B cell (primary cell): ENCODE measurements at regions of chr1 and their contacts with region 1.

Region 1: DNA sequence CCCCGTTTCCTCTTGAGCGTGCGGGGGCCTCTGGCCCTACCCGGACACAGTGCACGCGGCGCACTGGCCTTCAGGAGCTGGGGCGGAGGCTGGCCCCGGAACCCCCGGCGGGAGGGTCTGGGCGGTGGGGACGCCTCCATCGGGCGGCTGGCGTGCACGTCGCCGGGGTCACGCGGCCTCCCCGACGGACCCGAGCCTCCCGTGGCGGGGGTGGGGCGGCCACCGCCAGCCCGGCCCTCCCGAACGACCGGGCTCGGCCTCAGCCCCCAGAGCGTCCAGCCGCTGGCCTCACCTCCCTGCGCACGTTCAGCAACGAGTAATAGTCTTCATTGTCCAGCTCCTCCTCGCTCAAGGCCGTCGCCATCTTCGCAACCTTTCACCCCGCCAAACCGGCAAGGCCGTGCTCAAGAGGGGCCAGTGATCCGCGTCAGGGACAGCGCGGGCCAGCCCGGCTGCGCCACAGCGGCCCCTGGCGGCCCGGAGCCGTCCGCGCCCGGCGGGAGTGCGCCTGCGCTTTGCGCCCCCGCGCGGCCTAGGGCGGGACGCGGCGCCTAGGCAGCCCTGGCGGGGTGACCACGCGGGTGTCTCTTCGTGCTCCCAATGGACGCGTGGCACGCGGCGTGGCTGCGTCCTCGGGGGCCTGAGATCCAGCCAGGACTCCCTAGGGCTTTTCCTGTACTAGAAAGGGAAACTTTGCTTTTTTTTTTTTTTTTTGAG is at the start of gene DNAJC11:
- DNase-seq: peak; percentile 92
- ATAC-seq: peak; percentile 98
- H3K4me3 ChIP-seq: peak within 1 kb of the TSS; percentile 63 to 91 (median 79)
- H3K4me3 Mint-ChIP-seq: peak within 1 kb of the TSS; percentile 95
- H3K27ac ChIP-seq: peak within 1 kb of the TSS in 1 of 2 donors; percentile 91
- H3K27ac Mint-ChIP-seq: peak within 1 kb of the TSS; percentile 96
- H3K4me1 ChIP-seq: peaks cover 8 to 17% of the 10 kb centered on the region in 2 donors
- H3K4me1 Mint-ChIP-seq: peaks cover 22% of the 10 kb centered on the region
- H3K27me3 ChIP-seq: no peaks in the 10 kb centered on the region
- H3K27me3 Mint-ChIP-seq: no peaks in the 10 kb centered on the region
- CTCF ChIP-seq: peak; percentile 95
- total RNA-seq, gene DNAJC11: 51.6 and 57.2 TPM in 2 replicates

Region 2: GRCh38 chr1:6199298-6200187 is 502.1 kb before region 1 on chr1 and contains the start of gene RPL22:
- CTCF ChIA-PET with region 1: no interaction called
- POLR2A ChIA-PET with region 1: no interaction called
- intact Hi-C with region 1: loop called (anchors 5 kb)
- DNase-seq: peak; percentile 98
- ATAC-seq: peak; percentile 93
- H3K4me3 ChIP-seq: peak within 1 kb of the TSS; percentile 75 to 99 (median 89)
- H3K4me3 Mint-ChIP-seq: peak within 1 kb of the TSS; percentile 90
- H3K27ac ChIP-seq: peak within 1 kb of the TSS; percentile 44 to 83
- H3K27ac Mint-ChIP-seq: peak within 1 kb of the TSS; percentile 96
- H3K4me1 ChIP-seq: peaks cover 23 to 24% of the 10 kb centered on the region in 2 donors
- H3K4me1 Mint-ChIP-seq: peaks cover 39% of the 10 kb centered on the region
- H3K27me3 ChIP-seq: peaks cover 0 to 3% (median under 1%) of the 10 kb centered on the region in 4 experiments
- H3K27me3 Mint-ChIP-seq: peaks cover 6% of the 10 kb centered on the region
- CTCF ChIP-seq: no peak
- total RNA-seq, gene RPL22: 444 and 471 TPM in 2 replicates

Region 3: DNA sequence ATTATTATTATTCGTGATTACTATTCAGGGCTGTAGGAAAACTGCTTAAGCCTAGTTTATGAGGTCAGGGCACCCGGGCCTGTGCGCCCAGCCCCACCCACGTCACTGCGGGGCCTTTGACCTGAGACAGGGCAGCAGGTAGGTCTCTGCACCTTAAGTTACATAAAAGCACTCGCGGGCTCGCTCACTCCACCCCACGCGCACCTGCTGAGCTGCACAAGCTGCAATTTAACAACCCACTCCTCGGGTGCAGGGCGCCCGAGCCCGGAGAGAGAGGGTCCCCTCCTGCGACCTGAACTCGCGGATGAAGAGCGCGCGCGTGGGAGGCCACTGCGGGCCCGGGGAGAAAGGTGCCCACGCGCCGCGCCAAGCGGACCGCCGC is 466.3 kb before region 1 on chr1:
- CTCF ChIA-PET with region 1: no interaction called
- POLR2A ChIA-PET with region 1: no interaction called
- intact Hi-C with region 1: loop called (anchors 5 kb)
- DNase-seq: no peak
- ATAC-seq: no peak
- H3K4me3 ChIP-seq: peak overlapping the region in 4 of 5 experiments; percentile 47 to 84 (median 65)
- H3K4me3 Mint-ChIP-seq: peak overlapping the region; percentile 89
- H3K27ac ChIP-seq: no peak overlapping the region
- H3K27ac Mint-ChIP-seq: peak overlapping the region; percentile 71
- H3K4me1 ChIP-seq: peaks cover 9 to 15% of the 10 kb centered on the region in 2 donors
- H3K4me1 Mint-ChIP-seq: peaks cover 10% of the 10 kb centered on the region
- H3K27me3 ChIP-seq: peaks cover 0 to 17% (median 7%) of the 10 kb centered on the region in 4 experiments
- H3K27me3 Mint-ChIP-seq: peaks cover 14% of the 10 kb centered on the region
- CTCF ChIP-seq: no peak

Region 4: GRCh38 chr1:6393400-6394187 is 308.0 kb before region 1 on chr1 and contains the start of gene ACOT7:
- CTCF ChIA-PET with region 1: no interaction called
- POLR2A ChIA-PET with region 1: no interaction called
- intact Hi-C with region 1: loop called (anchors 2 kb)
- DNase-seq: peak; percentile 94
- ATAC-seq: peak; percentile 90
- H3K4me3 ChIP-seq: peak within 1 kb of the TSS; percentile 51 to 80 (median 64)
- H3K4me3 Mint-ChIP-seq: peak within 1 kb of the TSS; percentile 92
- H3K27ac ChIP-seq: peak within 1 kb of the TSS; percentile 84
- H3K27ac Mint-ChIP-seq: peak within 1 kb of the TSS; percentile 97
- H3K4me1 ChIP-seq: peaks cover 15 to 20% of the 10 kb centered on the region in 2 donors
- H3K4me1 Mint-ChIP-seq: peaks cover 16% of the 10 kb centered on the region
- H3K27me3 ChIP-seq: peaks cover 0 to 15% (median 0%) of the 10 kb centered on the region in 4 experiments
- H3K27me3 Mint-ChIP-seq: no peaks in the 10 kb centered on the region
- CTCF ChIP-seq: no peak
- total RNA-seq, gene ACOT7: 4.0 and 4.2 TPM in 2 replicates

Region 5: DNA sequence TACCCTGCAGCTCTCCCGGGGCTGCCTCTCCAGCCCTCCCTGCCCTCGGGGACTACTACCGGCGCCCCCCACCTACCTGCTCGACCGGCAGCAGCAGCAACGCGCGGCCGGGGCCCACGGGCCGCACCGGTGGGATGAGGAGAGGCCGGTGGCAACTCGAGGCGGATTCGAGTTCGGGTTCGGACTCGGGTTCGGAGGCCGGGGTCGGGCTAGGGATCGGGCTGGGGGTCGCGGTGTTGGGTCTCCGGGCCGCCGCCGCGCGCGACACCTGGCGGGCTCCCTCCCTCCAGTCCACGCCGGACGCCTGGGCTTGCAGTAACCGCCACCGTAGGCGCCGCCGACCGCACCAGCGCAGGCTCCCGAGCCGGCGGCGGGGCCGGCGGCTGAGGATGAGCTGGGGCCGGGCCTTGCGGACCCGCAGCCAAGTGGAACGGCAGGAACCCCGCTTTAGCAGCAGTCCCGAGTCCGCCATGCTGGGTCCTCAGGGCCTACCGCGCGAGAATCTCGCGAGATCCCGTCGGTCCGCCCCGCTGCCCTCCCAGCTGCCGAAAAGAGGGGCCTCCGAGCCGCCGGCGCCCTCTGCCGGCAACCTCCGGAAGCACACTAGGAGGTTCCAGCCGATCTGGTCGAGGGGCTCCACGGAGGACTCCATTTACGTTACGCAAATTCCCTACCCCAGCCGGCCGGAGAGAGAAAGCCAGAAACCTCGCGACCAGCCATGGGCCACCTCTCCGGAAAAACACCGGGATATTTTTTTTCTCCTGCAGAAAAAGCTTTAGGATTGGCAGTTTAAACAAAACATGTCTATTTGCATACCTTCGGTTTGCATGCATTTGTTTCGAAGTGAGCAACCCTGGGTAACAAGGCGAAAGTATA is 147.3 kb before region 1 on chr1 and contains the start of gene NOL9:
- CTCF ChIA-PET with region 1: no interaction called
- POLR2A ChIA-PET with region 1: no interaction called
- intact Hi-C with region 1: loop called (anchors 1 kb)
- DNase-seq: peak; percentile 97
- ATAC-seq: peak; percentile 96
- H3K4me3 ChIP-seq: peak within 1 kb of the TSS; percentile 72 to 93 (median 84)
- H3K4me3 Mint-ChIP-seq: peak within 1 kb of the TSS; percentile 87
- H3K27ac ChIP-seq: peak within 1 kb of the TSS; percentile 14 to 86
- H3K27ac Mint-ChIP-seq: peak within 1 kb of the TSS; percentile 86
- H3K4me1 ChIP-seq: peaks cover 17 to 23% of the 10 kb centered on the region in 2 donors
- H3K4me1 Mint-ChIP-seq: peaks cover 20% of the 10 kb centered on the region
- H3K27me3 ChIP-seq: no peaks in the 10 kb centered on the region
- H3K27me3 Mint-ChIP-seq: no peaks in the 10 kb centered on the region
- CTCF ChIP-seq: peak; percentile 94
- total RNA-seq, gene NOL9: 49.5 and 56.7 TPM in 2 replicates

Region 6: GRCh38 chr1:6624710-6625583 is 76.6 kb before region 1 on chr1 and contains the start of gene THAP3:
- CTCF ChIA-PET with region 1: no interaction called
- POLR2A ChIA-PET with region 1: no interaction called
- intact Hi-C with region 1: loop called (anchors 5 kb)
- DNase-seq: peak; percentile 92
- ATAC-seq: peak; percentile 98
- H3K4me3 ChIP-seq: peak within 1 kb of the TSS; percentile 61 to 80 (median 62)
- H3K4me3 Mint-ChIP-seq: peak within 1 kb of the TSS; percentile 93
- H3K27ac ChIP-seq: peak within 1 kb of the TSS in 1 of 2 donors; percentile 27
- H3K27ac Mint-ChIP-seq: peak within 1 kb of the TSS; percentile 81
- H3K4me1 ChIP-seq: peaks cover 13 to 32% of the 10 kb centered on the region in 2 donors
- H3K4me1 Mint-ChIP-seq: peaks cover 31% of the 10 kb centered on the region
- H3K27me3 ChIP-seq: no peaks in the 10 kb centered on the region
- H3K27me3 Mint-ChIP-seq: no peaks in the 10 kb centered on the region
- CTCF ChIP-seq: peak; percentile 57
- total RNA-seq, gene THAP3: 24.6 and 30.4 TPM in 2 replicates

Region 7: GRCh38 chr1:6743189-6744101 is 41.9 kb after region 1 on chr1:
- CTCF ChIA-PET with region 1: no interaction called
- POLR2A ChIA-PET with region 1: no interaction called
- intact Hi-C with region 1: no loop called
- DNase-seq: peak; percentile 13
- ATAC-seq: peak; percentile 49
- H3K4me3 ChIP-seq: no peak overlapping the region
- H3K4me3 Mint-ChIP-seq: peak overlapping the region; percentile 26
- H3K27ac ChIP-seq: no peak overlapping the region
- H3K27ac Mint-ChIP-seq: peak overlapping the region; percentile 8
- H3K4me1 ChIP-seq: peaks cover 5 to 9% of the 10 kb centered on the region in 2 donors
- H3K4me1 Mint-ChIP-seq: peaks cover 12% of the 10 kb centered on the region
- H3K27me3 ChIP-seq: peaks cover 0 to 3% (median 0%) of the 10 kb centered on the region in 4 experiments
- H3K27me3 Mint-ChIP-seq: peaks cover 4% of the 10 kb centered on the region
- CTCF ChIP-seq: no peak

Region 8: GRCh38 chr1:6784560-6785317 is 83.1 kb after region 1 on chr1:
- CTCF ChIA-PET with region 1: no interaction called
- POLR2A ChIA-PET with region 1: interaction called, 3 read pairs
- intact Hi-C with region 1: loop called (anchors 1 kb)
- DNase-seq: peak; percentile 100
- ATAC-seq: peak; percentile 78
- H3K4me3 ChIP-seq: peak overlapping the region; percentile 66 to 84 (median 77)
- H3K4me3 Mint-ChIP-seq: peak overlapping the region; percentile 95
- H3K27ac ChIP-seq: peak overlapping the region; percentile 87 to 99
- H3K27ac Mint-ChIP-seq: peak overlapping the region; percentile 97
- H3K4me1 ChIP-seq: peaks cover 15 to 18% of the 10 kb centered on the region in 2 donors
- H3K4me1 Mint-ChIP-seq: peaks cover 51% of the 10 kb centered on the region
- H3K27me3 ChIP-seq: no peaks in the 10 kb centered on the region
- H3K27me3 Mint-ChIP-seq: no peaks in the 10 kb centered on the region
- CTCF ChIP-seq: no peak